ENCODE measurements at regions of chr1 and their contacts with region 1.

Region 1: GRCh38 chr1:84141177-84142003 is 2.7 kb upstream of the PRKACB start:
- DNase-seq: no peak
- ATAC-seq: no peak
- H3K4me3 ChIP-seq: no peak overlapping the region
- H3K27ac ChIP-seq: no peak overlapping the region; a peak in 1 of 6 replicates
- H3K4me1 ChIP-seq: peaks cover 32% of the 10 kb centered on the region
- CTCF ChIP-seq: peak; percentile 63
- EP300 ChIP-seq: no peak
- POLR2A ChIP-seq: no peak
- RAD21 ChIP-seq: peak; percentile 69 to 78

Region 2: GRCh38 chr1:84192681-84193080 is 51.3 kb after region 1 on chr1:
- CTCF ChIA-PET with region 1: no interaction called
- POLR2A ChIA-PET with region 1: no interaction called
- DNase-seq: no peak
- ATAC-seq: no peak
- H3K4me3 ChIP-seq: no peak overlapping the region
- H3K27ac ChIP-seq: no peak overlapping the region
- H3K4me1 ChIP-seq: no peaks in the 10 kb centered on the region
- CTCF ChIP-seq: no peak
- EP300 ChIP-seq: no peak
- POLR2A ChIP-seq: no peak
- RAD21 ChIP-seq: no peak

Region 3: DNA sequence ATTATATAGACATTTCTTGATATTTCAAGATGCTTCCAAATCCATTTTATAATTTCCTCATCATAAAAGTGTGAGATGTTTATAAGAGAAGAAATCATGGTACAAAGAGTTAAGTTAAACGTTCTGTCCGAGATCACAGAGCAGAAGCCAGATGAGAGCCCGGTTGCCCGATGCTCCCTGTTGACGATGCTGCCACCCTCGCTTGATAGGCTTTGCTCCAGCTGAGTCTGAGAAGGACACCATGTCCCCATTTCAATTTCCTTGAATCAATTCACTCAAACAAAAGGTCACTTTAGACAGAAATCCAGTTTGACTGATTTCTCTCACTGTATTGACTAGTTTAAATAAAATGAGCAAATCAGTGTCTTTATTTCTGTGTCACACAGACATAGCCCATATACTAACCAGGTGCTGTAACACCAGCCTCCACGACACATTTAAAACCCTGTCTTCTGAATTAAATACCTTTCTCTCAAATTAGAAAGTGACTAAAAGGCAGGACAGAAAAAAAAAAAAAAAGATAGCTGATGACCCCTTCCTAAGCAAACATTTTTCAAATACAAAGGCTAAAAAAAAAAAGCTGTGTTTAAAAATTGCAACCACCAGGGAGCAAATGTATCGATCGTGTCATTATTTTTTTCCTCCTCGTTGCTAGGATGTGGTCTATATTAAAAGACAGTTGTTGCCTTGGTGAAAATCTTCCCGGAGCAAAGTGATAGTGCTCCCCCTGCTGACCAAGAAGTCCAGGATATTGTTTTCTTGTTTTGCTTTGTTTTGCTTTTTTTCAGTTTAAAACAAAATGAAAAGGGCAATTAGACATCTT is 292.1 kb after region 1 on chr1:
- CTCF ChIA-PET with region 1: interaction called, 36 read pairs
- POLR2A ChIA-PET with region 1: interaction called, 3 read pairs
- DNase-seq: peak; percentile 33 to 76
- ATAC-seq: peak; percentile 66 to 84; a peak in 3 of 6 replicates
- H3K4me3 ChIP-seq: peak overlapping the region; percentile 44; the same call in 2 of the 3 replicates
- H3K27ac ChIP-seq: peak overlapping the region; percentile 63 to 72; a peak in 4 of 6 replicates
- H3K4me1 ChIP-seq: peaks cover 6% of the 10 kb centered on the region; the same call in 2 of the 3 replicates
- CTCF ChIP-seq: peak; percentile 77
- EP300 ChIP-seq: no peak
- POLR2A ChIP-seq: no peak
- RAD21 ChIP-seq: peak; percentile 91 to 92

Measured in A549 (cell line).